HEK293T (cell line): ENCODE measurements at regions of chr6 and their contacts with region 1.

Region 1: GRCh38 chr6:42419490-42420280 is 32.0 kb downstream of the TRERF1 start:
- DNase-seq: no peak

Region 2: GRCh38 chr6:42279144-42279781 is 140.4 kb before region 1 on chr6:
- CTCF ChIA-PET with region 1: interaction called, 12 read pairs
- POLR2A ChIA-PET with region 1: no interaction called
- DNase-seq: no peak